Dorsolateral prefrontal cortex (tissue), 120 donors: ENCODE measurements at regions of chr2 and their contacts with region 1.

Region 1: DNA sequence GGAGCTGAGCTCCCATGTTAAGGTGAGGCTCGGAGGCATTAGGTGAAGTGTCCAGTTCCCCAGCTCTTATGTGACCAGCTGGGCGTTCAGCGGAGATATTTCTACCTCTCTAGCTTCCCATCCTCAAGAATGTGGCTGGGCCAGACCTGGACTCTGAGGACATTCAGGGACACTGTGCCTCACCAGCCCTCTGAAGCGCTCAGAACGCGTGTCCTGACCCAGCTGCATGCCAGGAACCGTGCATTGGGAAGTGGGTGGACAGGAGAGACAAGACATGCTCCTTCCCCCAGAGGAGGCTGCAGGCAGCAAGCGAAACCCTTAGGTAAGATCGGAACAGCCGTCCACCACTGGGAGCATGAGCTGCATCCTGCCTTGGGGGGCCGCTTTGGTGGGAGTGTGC is 38.0 kb upstream of the GPAT2 start:
- DNase-seq: no peak
- H3K4me3 ChIP-seq: no peak overlapping the region
- H3K27ac ChIP-seq: peak overlapping the region in 40 of 59 donors; percentile 29 to 89 (median 77)
- H3K27me3 ChIP-seq: no peaks in the 10 kb centered on the region
- CTCF ChIP-seq: no peak

Region 2: DNA sequence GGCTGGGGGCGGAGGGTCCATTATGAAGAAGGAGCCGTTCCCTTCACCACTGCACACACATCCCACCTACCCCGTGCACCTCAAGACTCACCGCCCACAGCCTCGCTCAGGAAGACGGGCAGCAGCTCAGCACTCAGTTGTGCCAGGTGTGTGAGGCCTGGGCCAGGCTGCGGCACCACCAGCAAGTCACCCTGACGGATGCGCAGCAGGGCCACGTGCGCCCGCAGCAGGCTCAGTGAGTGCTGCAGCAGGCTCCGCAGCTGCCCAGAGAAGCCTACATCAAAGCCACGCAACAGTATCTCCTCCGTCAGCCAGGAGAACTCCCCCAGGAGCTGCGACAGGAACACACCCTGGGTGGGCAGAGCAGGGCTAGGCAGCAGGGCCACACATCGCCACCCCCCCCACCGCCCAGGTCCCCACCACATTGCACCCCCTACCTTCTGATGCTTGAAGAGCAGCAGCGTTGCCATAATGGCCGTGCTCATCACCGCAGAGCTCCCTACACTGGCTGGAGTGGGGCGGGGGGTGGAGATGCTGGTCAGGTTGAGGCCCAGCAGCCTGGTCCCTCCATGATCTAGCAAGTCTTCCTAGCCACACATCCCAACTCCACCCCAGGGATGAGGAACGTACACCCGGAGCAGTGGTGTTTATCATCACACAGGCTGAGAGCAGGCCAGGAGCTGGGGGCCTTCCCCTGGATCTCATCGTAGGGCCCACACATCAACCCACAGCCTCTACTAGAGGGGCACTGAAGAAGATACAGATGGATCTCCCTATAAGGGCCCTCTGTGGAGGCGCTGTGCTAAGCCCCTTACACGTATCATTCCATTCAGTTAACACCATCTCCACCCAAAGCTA is 48.2 kb before region 1 on chr2:
- intact Hi-C with region 1: loop called in 1 of 2 experiments (anchors 10 kb)
- DNase-seq: peak in 5 of 10 donors; percentile 45 to 72 (median 55)
- H3K4me3 ChIP-seq: no peak overlapping the region
- H3K27ac ChIP-seq: peak overlapping the region in 57 of 59 donors; percentile 25 to 86 (median 69)
- H3K27me3 ChIP-seq: no peaks in the 10 kb centered on the region
- CTCF ChIP-seq: peak in 1 of 56 donors; percentile 5

Region 3: DNA sequence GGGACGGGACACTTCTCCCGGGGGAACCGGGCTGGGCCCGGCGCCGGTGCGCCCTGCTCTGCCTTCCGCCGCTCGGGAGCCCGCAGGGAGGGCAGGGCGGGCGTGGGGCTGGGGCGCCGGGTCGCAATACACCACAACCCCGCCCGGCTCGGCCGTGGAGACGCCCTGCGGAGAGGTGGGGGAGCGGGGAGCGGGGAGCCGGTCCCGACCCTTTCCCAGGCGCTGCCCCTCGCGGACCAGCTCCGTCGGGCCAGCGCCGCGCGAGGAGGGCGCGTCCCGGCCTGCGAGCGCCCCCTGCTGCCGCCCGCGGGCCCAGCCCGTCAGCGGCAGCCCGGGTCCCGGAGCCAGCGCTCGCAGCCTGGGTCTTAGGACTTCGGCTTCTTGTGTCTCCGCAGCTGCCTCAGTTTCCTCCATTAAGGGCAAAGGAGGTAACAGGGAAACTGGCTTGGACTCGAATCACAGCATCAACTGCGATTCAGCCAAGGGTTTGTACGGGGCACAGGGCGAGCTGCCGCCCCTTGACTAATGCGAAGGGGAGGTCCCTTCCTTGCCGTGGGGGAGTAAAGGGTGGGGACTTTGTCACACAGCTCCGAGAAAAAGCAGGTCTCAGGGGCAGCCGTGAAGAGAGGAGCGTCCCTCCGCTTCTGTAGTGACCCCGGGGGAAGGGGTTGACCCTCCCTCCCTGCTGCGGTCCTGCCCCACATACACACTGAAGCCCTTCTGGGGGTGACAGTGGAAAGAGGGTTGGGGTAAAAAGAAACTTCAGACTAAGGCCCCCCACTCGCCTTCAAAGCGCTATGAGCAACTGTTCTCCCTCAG is 44.3 kb after region 1 on chr2:
- intact Hi-C with region 1: loop called in 1 of 2 experiments (anchors 5 kb)
- DNase-seq: peak in 3 of 10 donors; percentile 35 to 81 (median 40)
- H3K4me3 ChIP-seq: peak overlapping the region in 58 of 59 donors; percentile 26 to 72 (median 56)
- H3K27ac ChIP-seq: peak overlapping the region in 1 of 59 donors; percentile 31
- H3K27me3 ChIP-seq: peaks cover 0 to 34% (median 18%) of the 10 kb centered on the region in 45 donors
- CTCF ChIP-seq: peak in 55 of 56 donors; percentile 13 to 98 (median 80)

Region 4: GRCh38 chr2:96409543-96410164 is 336.9 kb after region 1 on chr2:
- intact Hi-C with region 1: no loop called
- DNase-seq: peak in 2 of 10 donors; percentile 32 to 54
- H3K4me3 ChIP-seq: no peak overlapping the region
- H3K27ac ChIP-seq: peak overlapping the region in 44 of 59 donors; percentile 14 to 96 (median 91)
- H3K27me3 ChIP-seq: no peaks in the 10 kb centered on the region
- CTCF ChIP-seq: no peak

Region 5: DNA sequence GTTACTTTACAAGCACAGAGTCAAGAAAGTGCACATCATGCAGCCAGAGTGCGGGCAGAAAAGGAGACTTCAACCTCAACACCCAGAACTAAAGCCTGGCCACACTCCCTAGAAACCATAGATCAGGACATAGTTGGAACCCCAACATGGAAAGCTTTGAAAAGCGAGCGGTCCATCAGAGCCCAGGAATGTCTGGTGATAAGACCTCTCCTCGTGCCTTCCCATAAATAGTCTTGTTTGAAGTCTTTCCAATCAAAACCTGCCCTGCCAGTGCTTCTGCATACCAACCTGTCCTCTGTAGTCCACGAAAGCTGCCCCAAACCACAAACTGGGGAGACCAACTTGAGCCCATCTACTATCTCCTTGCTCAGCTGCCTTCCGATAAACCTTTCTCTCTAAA is 376.9 kb after region 1 on chr2:
- intact Hi-C with region 1: no loop called
- DNase-seq: no peak
- H3K4me3 ChIP-seq: no peak overlapping the region
- H3K27ac ChIP-seq: no peak overlapping the region
- H3K27me3 ChIP-seq: no peaks in the 10 kb centered on the region
- CTCF ChIP-seq: no peak